Activated naive CD4-positive, alpha-beta T cell treated with anti-CD3 and anti-CD28 coated beads for 36 hours (primary cell): ENCODE measurements at regions of chr2 and their contacts with region 1.

Region 1: DNA sequence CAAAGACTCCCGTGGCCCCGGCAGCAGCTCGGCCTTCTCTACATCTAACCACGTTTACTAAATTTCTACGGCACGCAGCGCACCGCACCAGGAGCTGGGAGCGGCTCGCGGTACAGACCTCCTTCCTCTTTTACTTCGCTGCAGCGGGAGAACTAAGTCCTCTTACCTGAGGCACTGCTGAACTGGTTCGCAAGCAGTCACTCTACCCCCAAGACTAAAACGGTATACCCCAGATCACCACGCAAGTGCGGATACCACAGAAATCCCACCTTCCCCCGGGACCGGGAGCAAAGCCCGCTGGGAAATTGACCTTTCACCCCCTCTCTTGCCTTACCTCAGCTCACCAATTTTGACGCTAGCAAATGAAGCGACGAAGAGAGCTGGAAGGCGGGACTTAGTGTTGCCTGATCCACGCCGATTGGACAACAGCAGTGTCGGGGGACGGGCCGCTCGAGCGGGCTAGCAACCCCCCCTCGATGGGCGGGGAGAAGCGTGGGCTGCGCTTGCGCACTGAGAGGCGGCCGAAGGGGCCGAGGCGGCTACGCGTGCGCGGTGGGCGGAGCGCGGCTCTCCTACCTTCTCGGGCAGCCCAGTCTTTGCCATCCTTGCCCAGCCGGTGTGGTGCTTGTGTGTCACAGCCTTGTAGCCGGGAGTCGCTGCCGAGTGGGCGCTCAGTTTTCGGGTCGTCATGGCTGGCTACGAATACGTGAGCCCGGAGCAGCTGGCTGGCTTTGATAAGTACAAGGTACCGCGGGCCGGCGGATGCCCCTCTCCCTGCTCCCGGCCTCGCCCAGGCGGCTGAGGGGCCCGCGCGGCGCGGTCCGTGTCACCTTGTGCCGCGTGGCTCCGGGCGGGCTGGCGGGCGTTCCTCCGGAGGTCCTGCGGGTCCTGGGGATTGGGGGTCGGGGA is at the start of gene SELENOI:
- DNase-seq: peak; percentile 99
- H3K4me3 Mint-ChIP-seq: peak within 1 kb of the TSS; percentile 90
- H3K27ac Mint-ChIP-seq: peak within 1 kb of the TSS; percentile 94
- H3K4me1 Mint-ChIP-seq: peaks cover 27% of the 10 kb centered on the region
- H3K27me3 Mint-ChIP-seq: no peaks in the 10 kb centered on the region
- total RNA-seq, gene SELENOI: 20.0 to 22.9 TPM

Region 2: DNA sequence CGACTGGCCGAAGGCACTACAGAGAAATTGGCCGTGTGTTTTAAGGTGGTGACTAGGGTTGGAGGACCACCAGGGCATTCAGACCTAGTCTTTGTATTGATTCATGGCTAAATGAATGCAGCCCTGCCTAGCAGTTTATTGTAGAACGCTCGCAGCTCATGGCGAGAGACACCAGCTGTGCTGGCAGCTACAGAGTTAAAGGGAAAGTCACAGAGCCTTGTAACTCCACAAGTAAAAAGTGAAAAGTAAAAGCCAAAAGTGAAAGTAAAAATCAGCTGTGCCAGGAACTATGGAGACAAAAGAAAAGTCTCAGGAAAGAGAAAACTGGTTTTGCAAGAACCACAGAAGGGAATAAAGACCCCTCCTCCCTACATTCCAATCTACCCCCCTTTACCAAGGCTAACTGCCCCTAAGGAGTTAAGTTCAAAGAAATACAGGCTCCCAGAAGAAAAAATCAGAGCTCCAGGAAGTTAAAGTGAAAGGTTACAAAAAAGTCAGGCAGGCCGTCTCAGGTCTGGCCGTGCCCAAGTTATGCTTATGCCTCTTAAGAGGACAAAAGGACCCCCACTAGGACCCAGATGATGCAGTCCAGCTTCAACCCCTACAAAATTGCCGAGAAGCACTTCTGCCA is 46.2 kb before region 1 on chr2:
- CTCF ChIA-PET with region 1: no interaction called
- intact Hi-C with region 1: loop called (anchors 2 kb)
- DNase-seq: peak; percentile 51
- H3K4me3 Mint-ChIP-seq: no peak overlapping the region
- H3K27ac Mint-ChIP-seq: no peak overlapping the region
- H3K4me1 Mint-ChIP-seq: no peaks in the 10 kb centered on the region
- H3K27me3 Mint-ChIP-seq: no peaks in the 10 kb centered on the region